MCF 10A (cell line): ENCODE measurements at regions of chr20 and their contacts with region 1.

Region 1: GRCh38 chr20:15930311-15931305 is 642.6 kb downstream of the KIF16B start:
- DNase-seq: peak; percentile 90
- H3K4me3 Mint-ChIP-seq: no peak overlapping the region
- H3K27ac Mint-ChIP-seq: peak overlapping the region; percentile 72
- H3K4me1 Mint-ChIP-seq: peaks cover 31% of the 10 kb centered on the region
- H3K27me3 Mint-ChIP-seq: no peaks in the 10 kb centered on the region
- CTCF ChIP-seq: peak; percentile 71

Region 2: GRCh38 chr20:14142171-14142570 is 1788.4 kb before region 1 on chr20:
- CTCF ChIA-PET with region 1: interaction called, 6 read pairs
- POLR2A ChIA-PET with region 1: no interaction called
- intact Hi-C with region 1: loop called (anchors 5 kb)
- DNase-seq: peak; percentile 48
- H3K4me3 Mint-ChIP-seq: no peak overlapping the region
- H3K27ac Mint-ChIP-seq: no peak overlapping the region
- H3K4me1 Mint-ChIP-seq: no peaks in the 10 kb centered on the region
- H3K27me3 Mint-ChIP-seq: no peaks in the 10 kb centered on the region
- CTCF ChIP-seq: peak; percentile 64

Region 3: DNA sequence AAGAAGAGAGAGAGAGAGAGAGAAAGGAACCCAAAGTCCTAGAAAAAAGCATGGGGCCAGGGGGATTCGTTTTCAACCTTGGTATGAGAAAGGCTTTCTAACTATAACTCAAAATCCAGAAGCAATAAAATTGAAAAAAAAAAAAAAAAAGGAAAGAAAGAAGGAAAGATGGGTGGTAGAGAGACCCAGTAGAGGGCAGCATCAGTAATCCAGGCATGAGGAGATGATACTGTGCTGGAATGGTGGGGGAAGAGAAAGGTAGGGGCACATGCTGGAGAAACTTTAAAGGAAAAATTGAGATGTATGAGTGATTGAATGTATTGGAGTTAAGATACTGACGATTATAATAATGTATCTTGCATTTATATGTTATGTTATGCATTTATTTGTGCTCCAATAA is 552.5 kb before region 1 on chr20:
- CTCF ChIA-PET with region 1: no interaction called
- POLR2A ChIA-PET with region 1: no interaction called
- intact Hi-C with region 1: loop called (anchors 10 kb)
- DNase-seq: no peak
- H3K4me3 Mint-ChIP-seq: no peak overlapping the region
- H3K27ac Mint-ChIP-seq: no peak overlapping the region
- H3K4me1 Mint-ChIP-seq: no peaks in the 10 kb centered on the region
- H3K27me3 Mint-ChIP-seq: no peaks in the 10 kb centered on the region
- CTCF ChIP-seq: no peak

Region 4: GRCh38 chr20:15643714-15644113 is 286.9 kb before region 1 on chr20:
- CTCF ChIA-PET with region 1: interaction called, 3 read pairs
- POLR2A ChIA-PET with region 1: no interaction called
- intact Hi-C with region 1: loop called (anchors 1 kb)
- DNase-seq: peak; percentile 33
- H3K4me3 Mint-ChIP-seq: no peak overlapping the region
- H3K27ac Mint-ChIP-seq: no peak overlapping the region
- H3K4me1 Mint-ChIP-seq: no peaks in the 10 kb centered on the region
- H3K27me3 Mint-ChIP-seq: no peaks in the 10 kb centered on the region
- CTCF ChIP-seq: peak; percentile 38

Region 5: DNA sequence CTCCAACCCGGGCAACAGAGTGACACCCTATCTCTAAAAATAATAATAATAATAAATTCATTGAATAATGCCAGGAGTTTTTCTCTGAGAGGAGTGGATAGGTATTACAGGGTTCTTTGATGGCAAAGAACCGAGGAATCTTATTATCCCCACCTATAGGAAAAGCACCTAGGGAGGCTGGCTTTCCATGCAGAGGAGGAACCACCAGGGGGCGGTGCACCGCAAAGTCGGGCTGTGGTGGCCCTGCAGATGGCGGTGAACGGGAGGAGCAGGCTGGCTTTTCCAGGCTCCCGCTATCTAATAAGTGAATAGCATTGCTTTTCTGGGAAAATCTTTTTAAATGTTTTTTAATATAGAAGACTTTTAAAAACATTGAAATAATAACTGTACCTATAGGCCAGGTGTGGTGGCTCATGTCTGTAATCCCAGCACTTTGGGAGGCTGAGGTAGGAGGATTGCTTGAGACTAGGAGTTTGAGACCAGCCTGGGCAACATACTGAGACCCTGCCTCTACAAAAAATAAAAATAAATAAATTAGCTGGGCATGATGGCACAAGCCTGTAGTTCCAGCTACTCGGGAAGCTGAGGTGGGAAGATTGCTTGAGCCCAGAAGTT is 221.5 kb before region 1 on chr20:
- CTCF ChIA-PET with region 1: interaction called, 3 read pairs
- POLR2A ChIA-PET with region 1: no interaction called
- intact Hi-C with region 1: loop called (anchors 2 kb)
- DNase-seq: peak; percentile 42
- H3K4me3 Mint-ChIP-seq: no peak overlapping the region
- H3K27ac Mint-ChIP-seq: no peak overlapping the region
- H3K4me1 Mint-ChIP-seq: peaks cover 3% of the 10 kb centered on the region
- H3K27me3 Mint-ChIP-seq: no peaks in the 10 kb centered on the region
- CTCF ChIP-seq: peak; percentile 68

Region 6: GRCh38 chr20:15942130-15942529 is 11.5 kb after region 1 on chr20:
- CTCF ChIA-PET with region 1: interaction called, 15 read pairs
- POLR2A ChIA-PET with region 1: interaction called, 12 read pairs
- intact Hi-C with region 1: no loop called
- DNase-seq: peak; percentile 81
- H3K4me3 Mint-ChIP-seq: no peak overlapping the region
- H3K27ac Mint-ChIP-seq: peak overlapping the region; percentile 82
- H3K4me1 Mint-ChIP-seq: peaks cover 28% of the 10 kb centered on the region
- H3K27me3 Mint-ChIP-seq: no peaks in the 10 kb centered on the region
- CTCF ChIP-seq: no peak

Region 7: DNA sequence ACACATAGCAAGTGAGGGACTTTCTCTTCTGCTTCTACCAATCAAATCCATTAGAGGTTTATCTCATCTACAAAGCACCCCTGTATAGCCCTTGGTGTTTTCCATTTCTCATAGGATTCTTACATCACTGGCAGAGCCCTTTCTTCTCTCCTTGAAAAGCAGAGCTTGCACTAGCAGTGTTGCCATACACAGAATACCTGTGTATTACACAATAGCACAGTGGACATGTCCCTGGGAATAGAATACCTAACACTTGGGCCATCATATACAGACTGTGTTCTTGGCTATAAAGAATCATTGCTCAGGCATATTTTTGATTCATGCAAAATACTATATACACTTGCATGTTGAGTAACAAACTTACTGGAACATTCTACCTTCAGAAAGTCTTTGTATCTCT is 60.7 kb after region 1 on chr20:
- CTCF ChIA-PET with region 1: no interaction called
- POLR2A ChIA-PET with region 1: no interaction called
- intact Hi-C with region 1: no loop called
- DNase-seq: no peak
- H3K4me3 Mint-ChIP-seq: no peak overlapping the region
- H3K27ac Mint-ChIP-seq: no peak overlapping the region
- H3K4me1 Mint-ChIP-seq: peaks cover 8% of the 10 kb centered on the region
- H3K27me3 Mint-ChIP-seq: no peaks in the 10 kb centered on the region
- CTCF ChIP-seq: no peak

Region 8: GRCh38 chr20:16476032-16476431 is 545.4 kb after region 1 on chr20:
- CTCF ChIA-PET with region 1: interaction called, 6 read pairs
- POLR2A ChIA-PET with region 1: no interaction called
- intact Hi-C with region 1: loop called (anchors 5 kb)
- DNase-seq: peak; percentile 57
- H3K4me3 Mint-ChIP-seq: no peak overlapping the region
- H3K27ac Mint-ChIP-seq: no peak overlapping the region
- H3K4me1 Mint-ChIP-seq: no peaks in the 10 kb centered on the region
- H3K27me3 Mint-ChIP-seq: no peaks in the 10 kb centered on the region
- CTCF ChIP-seq: peak; percentile 68